MCF 10A (cell line): ENCODE measurements at regions of chr10 and their contacts with region 1.

Region 1: GRCh38 chr10:58414270-58415041 is 29.2 kb downstream of the TFAM start:
- DNase-seq: peak; percentile 79
- H3K4me3 Mint-ChIP-seq: no peak overlapping the region
- H3K27ac Mint-ChIP-seq: no peak overlapping the region
- H3K4me1 Mint-ChIP-seq: peaks cover 16% of the 10 kb centered on the region
- H3K27me3 Mint-ChIP-seq: no peaks in the 10 kb centered on the region
- CTCF ChIP-seq: peak; percentile 67

Region 2: GRCh38 chr10:58457761-58458616 is 43.5 kb after region 1 on chr10:
- CTCF ChIA-PET with region 1: no interaction called
- POLR2A ChIA-PET with region 1: no interaction called
- intact Hi-C with region 1: no loop called
- DNase-seq: peak; percentile 73
- H3K4me3 Mint-ChIP-seq: no peak overlapping the region
- H3K27ac Mint-ChIP-seq: peak overlapping the region; percentile 64
- H3K4me1 Mint-ChIP-seq: peaks cover 12% of the 10 kb centered on the region
- H3K27me3 Mint-ChIP-seq: no peaks in the 10 kb centered on the region
- CTCF ChIP-seq: no peak

Region 3: GRCh38 chr10:58513188-58514110 is 99.0 kb after region 1 on chr10:
- CTCF ChIA-PET with region 1: interaction called, 10 read pairs
- POLR2A ChIA-PET with region 1: interaction called, 16 read pairs
- intact Hi-C with region 1: loop called (anchors 2 kb)
- DNase-seq: peak; percentile 73
- H3K4me3 Mint-ChIP-seq: peak overlapping the region; percentile 74
- H3K27ac Mint-ChIP-seq: peak overlapping the region; percentile 89
- H3K4me1 Mint-ChIP-seq: peaks cover 27% of the 10 kb centered on the region
- H3K27me3 Mint-ChIP-seq: no peaks in the 10 kb centered on the region
- CTCF ChIP-seq: no peak

Region 4: DNA sequence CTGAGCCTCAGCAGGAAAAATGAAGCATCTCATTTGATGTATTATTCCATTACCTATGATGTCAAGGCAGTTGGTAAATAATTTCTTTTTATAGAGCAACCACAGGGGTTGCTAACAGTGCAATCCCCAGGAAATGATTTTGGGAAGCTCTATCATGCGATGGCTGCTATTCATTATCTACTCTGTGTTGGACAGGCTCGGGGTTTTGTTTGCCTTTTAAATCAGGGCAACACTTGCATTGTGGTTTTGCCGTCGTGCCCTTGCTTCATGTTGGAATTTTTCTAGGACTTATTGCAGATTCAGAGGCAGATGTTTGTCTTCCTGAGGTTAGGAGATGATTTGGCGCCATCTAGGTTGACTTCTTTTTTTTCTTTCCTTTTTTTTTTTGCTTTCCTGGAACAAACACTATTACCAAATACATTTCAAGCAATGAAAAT is 226.7 kb after region 1 on chr10:
- CTCF ChIA-PET with region 1: interaction called, 12 read pairs
- POLR2A ChIA-PET with region 1: interaction called, 5 read pairs
- intact Hi-C with region 1: loop called (anchors 1 kb)
- DNase-seq: peak; percentile 86
- H3K4me3 Mint-ChIP-seq: peak overlapping the region; percentile 62
- H3K27ac Mint-ChIP-seq: peak overlapping the region; percentile 91
- H3K4me1 Mint-ChIP-seq: peaks cover 63% of the 10 kb centered on the region
- H3K27me3 Mint-ChIP-seq: no peaks in the 10 kb centered on the region
- CTCF ChIP-seq: peak; percentile 25

Region 5: GRCh38 chr10:58781873-58782488 is 367.5 kb after region 1 on chr10:
- CTCF ChIA-PET with region 1: interaction called, 13 read pairs
- POLR2A ChIA-PET with region 1: interaction called, 4 read pairs
- intact Hi-C with region 1: loop called (anchors 2 kb)
- DNase-seq: peak; percentile 59
- H3K4me3 Mint-ChIP-seq: no peak overlapping the region
- H3K27ac Mint-ChIP-seq: no peak overlapping the region
- H3K4me1 Mint-ChIP-seq: peaks cover 22% of the 10 kb centered on the region
- H3K27me3 Mint-ChIP-seq: no peaks in the 10 kb centered on the region
- CTCF ChIP-seq: peak; percentile 52

Region 6: GRCh38 chr10:59181668-59182067 is 767.2 kb after region 1 on chr10:
- CTCF ChIA-PET with region 1: interaction called, 6 read pairs
- POLR2A ChIA-PET with region 1: no interaction called
- intact Hi-C with region 1: loop called (anchors 1 kb)
- DNase-seq: peak; percentile 65
- H3K4me3 Mint-ChIP-seq: no peak overlapping the region
- H3K27ac Mint-ChIP-seq: no peak overlapping the region
- H3K4me1 Mint-ChIP-seq: no peaks in the 10 kb centered on the region
- H3K27me3 Mint-ChIP-seq: peaks cover 10% of the 10 kb centered on the region
- CTCF ChIP-seq: peak; percentile 48